CD14-positive monocyte (primary cell): ENCODE measurements at regions of chr14 and their contacts with region 1.

Region 1: GRCh38 chr14:74109369-74109768 is 24.6 kb downstream of the LIN52 start:
- DNase-seq: no peak
- H3K4me3 ChIP-seq: no peak overlapping the region
- H3K4me3 Mint-ChIP-seq: no peak overlapping the region
- H3K27ac ChIP-seq: no peak overlapping the region
- H3K27ac Mint-ChIP-seq: no peak overlapping the region
- H3K4me1 ChIP-seq: no peaks in the 10 kb centered on the region
- H3K4me1 Mint-ChIP-seq: no peaks in the 10 kb centered on the region
- H3K27me3 ChIP-seq: no peaks in the 10 kb centered on the region
- H3K27me3 Mint-ChIP-seq: no peaks in the 10 kb centered on the region
- CTCF ChIP-seq: no peak

Region 2: DNA sequence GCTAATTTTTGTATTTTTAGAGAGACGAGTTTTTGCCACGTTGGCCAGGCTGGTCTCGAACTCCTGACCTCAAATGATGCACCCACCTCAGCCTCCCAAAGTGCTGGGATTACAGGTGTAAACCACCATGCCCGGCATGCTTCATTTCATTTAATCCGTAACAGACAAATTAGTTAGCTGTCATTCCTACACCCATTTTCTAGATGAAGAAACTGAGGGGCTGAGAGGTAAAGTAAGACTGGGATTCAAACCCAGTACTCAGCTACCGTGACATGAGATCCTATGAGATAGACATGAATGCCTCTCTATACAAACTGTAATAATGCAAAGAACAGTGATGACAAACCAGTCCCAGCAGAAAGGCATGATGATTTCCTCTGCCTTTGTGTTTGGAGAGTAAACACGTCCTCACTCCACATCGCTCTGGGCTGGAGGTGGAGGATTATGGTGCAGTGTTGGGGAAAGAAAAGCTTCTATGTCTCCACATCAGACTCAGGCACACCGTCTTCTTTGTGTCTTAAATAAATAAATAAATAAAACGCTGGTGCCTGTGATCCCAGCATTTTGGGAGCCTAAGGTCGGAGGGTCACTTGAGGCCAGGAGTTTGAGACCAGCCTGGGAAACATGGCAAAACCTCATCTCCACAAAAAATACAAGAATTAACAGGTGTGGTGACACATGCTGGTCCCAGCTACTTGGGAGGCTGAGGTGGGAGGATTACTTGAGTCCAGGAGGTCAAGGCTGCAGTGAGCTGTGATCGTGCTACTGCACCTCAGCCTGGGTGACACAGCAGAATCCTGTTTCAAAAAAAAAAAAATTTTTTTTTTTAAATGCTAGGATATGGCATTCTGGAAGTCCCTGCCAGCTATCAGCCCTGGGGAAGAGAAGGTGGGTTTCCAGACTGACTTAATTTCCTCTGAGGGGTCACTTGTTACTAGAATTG is 140.3 kb after region 1 on chr14:
- intact Hi-C with region 1: loop called in 1 of 2 experiments (anchors 1 kb)
- DNase-seq: no peak
- H3K4me3 ChIP-seq: no peak overlapping the region
- H3K4me3 Mint-ChIP-seq: no peak overlapping the region
- H3K27ac ChIP-seq: no peak overlapping the region
- H3K27ac Mint-ChIP-seq: no peak overlapping the region
- H3K4me1 ChIP-seq: peaks cover 0 to 5% of the 10 kb centered on the region in 2 donors
- H3K4me1 Mint-ChIP-seq: peaks cover 8% of the 10 kb centered on the region
- H3K27me3 ChIP-seq: peaks cover 0 to 42% of the 10 kb centered on the region in 2 donors
- H3K27me3 Mint-ChIP-seq: peaks cover 24 to 57% (median 39%) of the 10 kb centered on the region in 3 donors
- CTCF ChIP-seq: no peak

Region 3: DNA sequence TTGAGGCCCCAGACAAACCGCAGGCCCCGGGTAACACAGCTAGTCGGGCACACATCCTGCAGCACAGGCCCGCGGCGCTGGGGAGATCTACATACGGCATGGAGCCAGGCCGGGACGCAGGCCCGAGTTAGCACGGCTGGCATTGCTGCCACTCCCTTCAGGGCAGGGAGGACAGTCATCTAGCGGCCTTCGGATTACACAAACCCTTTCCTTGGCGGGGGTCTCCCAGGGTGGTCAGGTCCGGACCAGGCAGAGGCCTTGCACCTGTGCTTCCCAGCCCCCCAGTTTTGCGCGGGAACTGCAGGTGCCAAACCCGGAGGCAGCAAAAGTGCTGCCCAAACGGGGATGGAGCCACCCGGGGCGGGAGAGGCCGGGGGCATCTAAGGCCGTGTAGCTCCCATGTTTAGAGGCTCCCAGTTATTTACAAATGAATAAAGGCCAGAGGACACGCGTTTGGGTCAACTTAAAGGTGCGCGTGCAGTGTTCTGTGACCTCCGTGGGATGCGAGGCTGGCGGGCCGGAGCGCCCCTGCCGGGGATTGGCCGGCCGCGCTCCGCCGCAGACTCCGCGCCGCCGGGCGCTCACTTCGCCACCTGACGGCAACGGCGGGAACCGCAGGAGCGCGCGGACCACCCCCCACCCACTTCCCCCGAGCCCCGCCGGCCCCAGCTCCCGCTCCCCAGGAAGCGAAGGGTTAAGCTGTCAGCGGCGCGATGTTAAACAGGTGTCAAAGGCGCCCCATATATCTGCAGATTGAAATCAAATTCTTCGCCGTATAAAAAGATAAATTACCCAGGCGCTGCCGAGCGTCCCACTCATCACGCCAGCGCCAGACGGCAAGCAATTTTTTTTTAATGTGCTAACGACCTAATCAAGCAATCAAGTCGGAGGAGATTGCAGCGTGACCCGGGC is 148.0 kb after region 1 on chr14:
- intact Hi-C with region 1: loop called in 1 of 2 experiments (anchors 2 kb)
- DNase-seq: peak; percentile 35 to 56 (median 41)
- H3K4me3 ChIP-seq: peak overlapping the region; percentile 51 to 82 (median 53)
- H3K4me3 Mint-ChIP-seq: peak overlapping the region; percentile 83 to 92
- H3K27ac ChIP-seq: no peak overlapping the region
- H3K27ac Mint-ChIP-seq: peak overlapping the region in 2 of 7 donors; percentile 16 to 49
- H3K4me1 ChIP-seq: peaks cover 15 to 16% of the 10 kb centered on the region in 2 donors
- H3K4me1 Mint-ChIP-seq: peaks cover 12% of the 10 kb centered on the region
- H3K27me3 ChIP-seq: peaks cover 13 to 27% of the 10 kb centered on the region in 2 donors
- H3K27me3 Mint-ChIP-seq: peaks cover 28 to 56% (median 42%) of the 10 kb centered on the region in 3 donors
- CTCF ChIP-seq: peak; percentile 100